Activated CD8-positive, alpha-beta T cell treated with anti-CD3 and anti-CD28 coated beads for 36 hours (primary cell): ENCODE measurements at regions of chr3 and their contacts with region 1.

Region 1: GRCh38 chr3:182861348-182861747 is 68.0 kb downstream of the ATP11B start:
- DNase-seq: no peak
- ATAC-seq: peak; percentile 37
- H3K4me3 Mint-ChIP-seq: no peak overlapping the region
- H3K27ac Mint-ChIP-seq: peak overlapping the region; percentile 91
- H3K4me1 Mint-ChIP-seq: peaks cover 20% of the 10 kb centered on the region
- H3K27me3 Mint-ChIP-seq: no peaks in the 10 kb centered on the region
- CTCF ChIP-seq: no peak

Region 2: GRCh38 chr3:182792901-182793662 is 68.3 kb before region 1 on chr3 and contains the start of gene ATP11B:
- CTCF ChIA-PET with region 1: no interaction called
- POLR2A ChIA-PET with region 1: no interaction called
- intact Hi-C with region 1: loop called (anchors 5 kb)
- DNase-seq: peak; percentile 78
- ATAC-seq: peak; percentile 68
- H3K4me3 Mint-ChIP-seq: peak within 1 kb of the TSS; percentile 99
- H3K27ac Mint-ChIP-seq: peak within 1 kb of the TSS; percentile 99
- H3K4me1 Mint-ChIP-seq: peaks cover 24% of the 10 kb centered on the region
- H3K27me3 Mint-ChIP-seq: peaks cover 2% of the 10 kb centered on the region
- CTCF ChIP-seq: no peak
- total RNA-seq, gene ATP11B: 85.7 to 95.3 TPM

Region 3: GRCh38 chr3:182829761-182830405 is 31.5 kb before region 1 on chr3:
- CTCF ChIA-PET with region 1: no interaction called
- POLR2A ChIA-PET with region 1: no interaction called
- intact Hi-C with region 1: no loop called
- DNase-seq: no peak
- ATAC-seq: no peak
- H3K4me3 Mint-ChIP-seq: no peak overlapping the region
- H3K27ac Mint-ChIP-seq: no peak overlapping the region
- H3K4me1 Mint-ChIP-seq: peaks cover 31% of the 10 kb centered on the region
- H3K27me3 Mint-ChIP-seq: no peaks in the 10 kb centered on the region
- CTCF ChIP-seq: no peak